MCF 10A (cell line): ENCODE measurements at regions of chr19 and their contacts with region 1.

Region 1: GRCh38 chr19:46860125-46860845 is 512 bp upstream of the ARHGAP35 start:
- DNase-seq: peak; percentile 99
- H3K4me3 Mint-ChIP-seq: no peak overlapping the region
- H3K27ac Mint-ChIP-seq: peak overlapping the region; percentile 71
- H3K4me1 Mint-ChIP-seq: peaks cover 11% of the 10 kb centered on the region
- H3K27me3 Mint-ChIP-seq: no peaks in the 10 kb centered on the region
- CTCF ChIP-seq: no peak

Region 2: GRCh38 chr19:46551164-46551563 is 309.1 kb before region 1 on chr19:
- CTCF ChIA-PET with region 1: no interaction called
- POLR2A ChIA-PET with region 1: no interaction called
- intact Hi-C with region 1: no loop called
- DNase-seq: no peak
- H3K4me3 Mint-ChIP-seq: no peak overlapping the region
- H3K27ac Mint-ChIP-seq: no peak overlapping the region
- H3K4me1 Mint-ChIP-seq: no peaks in the 10 kb centered on the region
- H3K27me3 Mint-ChIP-seq: peaks cover 13% of the 10 kb centered on the region
- CTCF ChIP-seq: no peak

Region 3: DNA sequence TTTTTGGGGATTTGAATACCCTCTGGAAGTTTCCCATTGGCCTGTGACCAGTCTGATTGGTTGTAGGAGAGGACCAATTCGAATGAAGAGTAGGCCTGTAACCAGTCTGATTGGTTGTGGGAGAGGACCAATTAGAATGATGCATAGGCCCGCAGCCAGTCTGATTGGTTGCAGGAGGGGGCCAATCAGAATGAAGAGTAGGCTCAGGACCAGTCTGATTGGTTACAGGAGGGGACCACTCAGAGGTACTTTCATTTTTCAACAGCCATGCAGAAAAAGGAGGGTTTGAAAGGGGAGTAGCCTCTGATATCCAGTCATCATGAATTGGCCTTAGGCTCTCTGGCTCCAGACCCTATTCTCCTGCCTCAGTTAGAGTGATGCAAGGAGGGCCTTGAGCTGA is 41.5 kb before region 1 on chr19:
- CTCF ChIA-PET with region 1: no interaction called
- POLR2A ChIA-PET with region 1: no interaction called
- intact Hi-C with region 1: no loop called
- DNase-seq: peak; percentile 14
- H3K4me3 Mint-ChIP-seq: no peak overlapping the region
- H3K27ac Mint-ChIP-seq: no peak overlapping the region
- H3K4me1 Mint-ChIP-seq: peaks cover 4% of the 10 kb centered on the region
- H3K27me3 Mint-ChIP-seq: no peaks in the 10 kb centered on the region
- CTCF ChIP-seq: no peak

Region 4: GRCh38 chr19:46875234-46875633 is 14.9 kb after region 1 on chr19:
- CTCF ChIA-PET with region 1: no interaction called
- POLR2A ChIA-PET with region 1: interaction called, 50 read pairs
- intact Hi-C with region 1: no loop called
- DNase-seq: no peak
- H3K4me3 Mint-ChIP-seq: peak overlapping the region; percentile 33
- H3K27ac Mint-ChIP-seq: peak overlapping the region; percentile 84
- H3K4me1 Mint-ChIP-seq: peaks cover 11% of the 10 kb centered on the region
- H3K27me3 Mint-ChIP-seq: no peaks in the 10 kb centered on the region
- CTCF ChIP-seq: no peak

Region 5: GRCh38 chr19:46975925-46976782 is 115.9 kb after region 1 on chr19:
- CTCF ChIA-PET with region 1: no interaction called
- POLR2A ChIA-PET with region 1: interaction called, 13 read pairs
- intact Hi-C with region 1: no loop called
- DNase-seq: peak; percentile 61
- H3K4me3 Mint-ChIP-seq: peak overlapping the region; percentile 28
- H3K27ac Mint-ChIP-seq: peak overlapping the region; percentile 43
- H3K4me1 Mint-ChIP-seq: peaks cover 27% of the 10 kb centered on the region
- H3K27me3 Mint-ChIP-seq: no peaks in the 10 kb centered on the region
- CTCF ChIP-seq: no peak

Region 6: GRCh38 chr19:47035127-47036096 is 175.1 kb after region 1 on chr19:
- CTCF ChIA-PET with region 1: no interaction called
- POLR2A ChIA-PET with region 1: interaction called, 7 read pairs
- intact Hi-C with region 1: loop called (anchors 1 kb)
- DNase-seq: peak; percentile 95
- H3K4me3 Mint-ChIP-seq: peak overlapping the region; percentile 74
- H3K27ac Mint-ChIP-seq: peak overlapping the region; percentile 94
- H3K4me1 Mint-ChIP-seq: peaks cover 8% of the 10 kb centered on the region
- H3K27me3 Mint-ChIP-seq: no peaks in the 10 kb centered on the region
- CTCF ChIP-seq: peak; percentile 91

Region 7: DNA sequence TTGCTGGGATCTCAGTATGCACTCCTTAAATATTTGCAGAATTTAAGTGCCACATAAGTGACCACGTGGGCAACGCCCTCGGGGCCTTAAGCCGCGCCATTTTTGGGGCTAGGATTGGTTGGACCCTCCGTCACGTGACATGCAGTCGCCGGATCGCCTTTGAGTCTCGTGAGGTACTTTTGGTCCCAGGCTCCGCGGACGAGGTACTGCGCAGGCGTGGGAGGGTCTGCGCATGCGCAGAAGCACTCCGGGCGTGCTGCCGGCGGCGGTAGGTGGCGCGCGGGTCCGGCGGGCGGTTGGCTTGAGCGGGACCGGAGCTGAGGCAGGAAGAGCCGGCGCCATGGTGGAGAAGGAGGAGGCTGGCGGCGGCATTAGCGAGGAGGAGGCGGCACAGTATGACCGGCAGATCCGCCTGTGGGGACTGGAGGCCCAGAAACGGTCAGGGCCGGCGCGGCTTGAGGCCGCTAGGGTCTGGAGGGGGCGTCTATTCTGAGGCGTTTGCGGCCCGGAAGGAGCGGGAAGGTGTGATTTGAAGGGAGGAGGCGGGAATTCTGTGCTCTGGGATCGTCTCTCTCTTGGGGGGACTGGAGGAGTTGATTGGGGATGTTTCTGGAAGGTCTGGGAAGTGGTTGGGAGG is 270.4 kb after region 1 on chr19 and contains the start of gene SAE1:
- CTCF ChIA-PET with region 1: interaction called, 3 read pairs
- POLR2A ChIA-PET with region 1: no interaction called
- intact Hi-C with region 1: loop called (anchors 5 kb)
- DNase-seq: peak; percentile 98
- H3K4me3 Mint-ChIP-seq: peak within 1 kb of the TSS; percentile 99
- H3K27ac Mint-ChIP-seq: peak within 1 kb of the TSS; percentile 92
- H3K4me1 Mint-ChIP-seq: peaks cover 35% of the 10 kb centered on the region
- H3K27me3 Mint-ChIP-seq: no peaks in the 10 kb centered on the region
- CTCF ChIP-seq: peak; percentile 23
- total RNA-seq, gene SAE1: 76.1 and 81.7 TPM in 2 replicates